Activated CD4-positive, alpha-beta T cell treated with anti-CD3 and anti-CD28 coated beads for 36 hours (primary cell): ENCODE measurements at regions of chr19 and their contacts with region 1.

Region 1: GRCh38 chr19:58466760-58467589 is at the start of gene ZNF324:
- DNase-seq: peak; percentile 99
- ATAC-seq: peak; percentile 98
- H3K4me3 Mint-ChIP-seq: peak within 1 kb of the TSS; percentile 86
- H3K27ac Mint-ChIP-seq: peak within 1 kb of the TSS; percentile 47
- H3K4me1 Mint-ChIP-seq: peaks cover 22% of the 10 kb centered on the region
- H3K27me3 Mint-ChIP-seq: peaks cover 2% of the 10 kb centered on the region
- total RNA-seq, gene ZNF324: 4.7 to 7.5 TPM

Region 2: DNA sequence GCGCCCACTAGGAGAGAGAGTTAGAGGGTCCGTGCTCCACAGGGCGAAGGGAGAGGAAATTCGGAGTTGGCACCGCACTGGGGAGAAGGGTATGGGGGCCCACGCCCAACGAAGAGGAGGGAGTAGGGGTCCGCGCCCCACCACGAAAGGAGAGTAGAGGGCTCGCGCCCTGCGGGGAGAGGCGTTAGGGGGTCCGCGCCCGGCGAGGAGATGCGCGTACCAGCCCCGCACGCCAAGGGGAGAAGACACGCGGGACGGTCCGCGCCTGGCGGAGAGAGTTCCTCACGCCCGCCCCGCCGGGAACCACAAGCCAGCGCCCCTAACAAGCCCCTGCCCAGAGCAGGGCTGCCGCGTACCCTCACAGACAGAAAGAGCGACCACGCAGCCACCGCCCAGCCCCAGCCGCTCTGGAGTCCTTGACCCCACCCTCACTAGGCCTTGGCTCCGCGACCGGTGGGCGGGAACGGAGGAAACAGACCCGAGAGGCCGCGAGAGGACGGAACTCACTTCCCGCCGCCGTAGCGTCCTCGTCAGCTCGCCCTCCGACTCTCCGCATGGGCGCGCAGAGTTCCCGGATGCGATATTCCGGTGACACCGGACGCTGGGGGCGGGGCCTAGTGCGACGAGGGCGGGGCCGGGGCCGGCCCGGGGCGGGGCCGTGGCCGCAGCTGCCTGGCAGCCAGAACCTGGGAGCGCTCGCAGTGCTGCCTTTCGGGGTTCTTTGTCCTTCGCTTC is 349.0 kb before region 1 on chr19:
- CTCF ChIA-PET with region 1: no interaction called
- POLR2A ChIA-PET with region 1: no interaction called
- intact Hi-C with region 1: no loop called
- DNase-seq: peak; percentile 10
- ATAC-seq: no peak
- H3K4me3 Mint-ChIP-seq: no peak overlapping the region
- H3K27ac Mint-ChIP-seq: no peak overlapping the region
- H3K4me1 Mint-ChIP-seq: no peaks in the 10 kb centered on the region
- H3K27me3 Mint-ChIP-seq: peaks cover 17% of the 10 kb centered on the region

Region 3: GRCh38 chr19:58386576-58387337 is 80.2 kb before region 1 on chr19 and contains the start of gene RPS5:
- CTCF ChIA-PET with region 1: no interaction called
- POLR2A ChIA-PET with region 1: no interaction called
- intact Hi-C with region 1: loop called in 1 of 2 experiments (anchors 1 kb)
- DNase-seq: peak; percentile 97
- ATAC-seq: peak; percentile 96
- H3K4me3 Mint-ChIP-seq: peak within 1 kb of the TSS; percentile 96
- H3K27ac Mint-ChIP-seq: peak within 1 kb of the TSS; percentile 97
- H3K4me1 Mint-ChIP-seq: peaks cover 33% of the 10 kb centered on the region
- H3K27me3 Mint-ChIP-seq: no peaks in the 10 kb centered on the region
- total RNA-seq, gene RPS5: 1,234 to 1,535 TPM

Region 4: GRCh38 chr19:58451358-58452101 is 15.4 kb before region 1 on chr19 and contains the start of gene ZNF324B:
- CTCF ChIA-PET with region 1: no interaction called
- POLR2A ChIA-PET with region 1: interaction called, 3 read pairs
- intact Hi-C with region 1: loop called (anchors 1 kb)
- DNase-seq: peak; percentile 98
- ATAC-seq: peak; percentile 99
- H3K4me3 Mint-ChIP-seq: peak within 1 kb of the TSS; percentile 77
- H3K27ac Mint-ChIP-seq: peak within 1 kb of the TSS; percentile 55
- H3K4me1 Mint-ChIP-seq: peaks cover 25% of the 10 kb centered on the region
- H3K27me3 Mint-ChIP-seq: peaks cover 15% of the 10 kb centered on the region
- total RNA-seq, gene ZNF324B: 5.8 to 7.5 TPM

Region 5: GRCh38 chr19:58482372-58482771 is 15.4 kb after region 1 on chr19:
- CTCF ChIA-PET with region 1: no interaction called
- POLR2A ChIA-PET with region 1: no interaction called
- intact Hi-C with region 1: no loop called
- DNase-seq: no peak
- ATAC-seq: no peak
- H3K4me3 Mint-ChIP-seq: no peak overlapping the region
- H3K27ac Mint-ChIP-seq: no peak overlapping the region
- H3K4me1 Mint-ChIP-seq: no peaks in the 10 kb centered on the region
- H3K27me3 Mint-ChIP-seq: no peaks in the 10 kb centered on the region

Region 6: GRCh38 chr19:58558623-58559274 is 91.8 kb after region 1 on chr19:
- CTCF ChIA-PET with region 1: no interaction called
- POLR2A ChIA-PET with region 1: no interaction called
- intact Hi-C with region 1: loop called in 1 of 2 experiments (anchors 1 kb)
- DNase-seq: peak; percentile 100
- ATAC-seq: peak; percentile 69
- H3K4me3 Mint-ChIP-seq: peak overlapping the region; percentile 92
- H3K27ac Mint-ChIP-seq: peak overlapping the region; percentile 100
- H3K4me1 Mint-ChIP-seq: peaks cover 65% of the 10 kb centered on the region
- H3K27me3 Mint-ChIP-seq: no peaks in the 10 kb centered on the region